ENCODE measurements at regions of chr1 and their contacts with region 1.

Region 1: GRCh38 chr1:196853406-196853805 is 33.9 kb downstream of the CFHR1 start:
- DNase-seq: no peak
- ATAC-seq: no peak
- H3K4me3 ChIP-seq: no peak overlapping the region
- H3K27ac ChIP-seq: no peak overlapping the region
- H3K4me1 ChIP-seq: no peaks in the 10 kb centered on the region
- H3K27me3 ChIP-seq: no peaks in the 10 kb centered on the region
- CTCF ChIP-seq: no peak
- POLR2A ChIP-seq: no peak

Region 2: DNA sequence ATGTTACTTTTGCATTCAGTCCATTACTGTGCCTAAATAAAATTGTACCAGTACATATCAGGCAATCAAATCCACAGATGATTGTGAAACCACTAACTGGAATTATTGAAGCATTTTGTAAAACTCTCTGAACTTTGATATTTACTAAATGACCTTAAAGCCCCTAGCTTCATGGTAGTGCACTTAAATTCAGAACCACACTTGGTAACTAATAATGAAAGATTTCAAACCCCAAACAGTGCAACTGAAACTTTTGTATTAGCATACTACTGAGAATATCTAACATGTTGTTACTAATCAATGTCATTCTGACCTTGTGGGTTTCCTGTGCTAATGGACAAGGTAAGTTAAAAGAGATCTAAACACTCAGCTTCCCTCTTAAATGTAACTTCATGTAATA is 78.8 kb before region 1 on chr1 and contains the start of gene CFHR3:
- intact Hi-C with region 1: loop called in 1 of 10 experiments (anchors 10 kb)
- DNase-seq: no peak
- ATAC-seq: no peak
- H3K4me3 ChIP-seq: no peak within 1 kb of the TSS
- H3K27ac ChIP-seq: no peak within 1 kb of the TSS
- H3K4me1 ChIP-seq: no peaks in the 10 kb centered on the region
- H3K27me3 ChIP-seq: no peaks in the 10 kb centered on the region
- CTCF ChIP-seq: no peak
- POLR2A ChIP-seq: no peak
- total RNA-seq, gene CFHR3: 0.21 TPM in 1 of 9 donors, not detected in the others

Measured in heart left ventricle (tissue), 16 donors.